Mammary epithelial cell (primary cell): ENCODE measurements at regions of chr5 and their contacts with region 1.

Region 1: DNA sequence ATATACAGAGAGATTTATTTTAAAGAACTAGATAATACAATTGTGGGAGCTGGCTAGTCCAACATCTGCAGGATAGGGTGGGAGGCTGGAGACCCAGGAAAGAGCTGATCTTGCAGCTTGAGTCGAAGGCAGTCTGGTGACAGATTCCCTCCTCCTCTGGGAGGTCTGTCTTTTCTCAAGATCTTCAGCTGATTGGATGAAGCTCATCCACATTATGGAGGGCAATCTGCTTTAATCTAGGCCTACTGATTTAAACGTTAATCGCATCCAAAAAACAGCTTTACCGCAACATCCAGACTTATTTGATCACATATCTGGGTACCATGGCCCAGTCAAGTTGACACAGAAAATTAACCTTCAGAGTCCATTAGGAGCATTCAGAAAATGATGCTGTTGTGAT is 168.1 kb downstream of the ATPSCKMT start:
- DNase-seq: no peak
- H3K4me3 ChIP-seq: no peak overlapping the region
- H3K27ac ChIP-seq: no peak overlapping the region
- H3K4me1 ChIP-seq: no peaks in the 10 kb centered on the region
- H3K27me3 ChIP-seq: no peaks in the 10 kb centered on the region
- CTCF ChIP-seq: no peak

Region 2: GRCh38 chr5:9977070-9977469 is 104.5 kb before region 1 on chr5:
- CTCF ChIA-PET with region 1: no interaction called
- dilution Hi-C with region 1: loop called (anchors 5 kb)
- in situ Hi-C with region 1: no loop called
- intact Hi-C with region 1: no loop called
- DNase-seq: no peak
- H3K4me3 ChIP-seq: no peak overlapping the region
- H3K27ac ChIP-seq: no peak overlapping the region
- H3K4me1 ChIP-seq: no peaks in the 10 kb centered on the region
- H3K27me3 ChIP-seq: no peaks in the 10 kb centered on the region
- CTCF ChIP-seq: no peak

Region 3: DNA sequence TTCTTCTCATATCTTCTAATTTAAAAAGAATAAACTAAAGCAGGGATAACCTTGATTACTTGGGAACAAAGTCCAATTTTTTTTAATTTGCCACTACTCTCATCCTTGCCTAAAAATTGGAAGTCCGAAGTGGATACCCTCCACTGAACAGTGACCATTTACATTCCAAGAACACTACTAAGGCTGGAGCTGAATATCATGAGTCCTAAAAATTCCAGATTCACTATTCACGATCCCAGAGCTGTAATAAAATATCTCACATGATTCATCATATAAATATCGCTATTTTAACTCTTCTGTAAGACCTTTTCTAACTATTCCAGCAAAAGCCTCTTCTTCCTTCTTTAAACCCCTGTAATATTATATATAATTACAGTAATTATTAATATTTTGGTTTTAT is 110.7 kb after region 1 on chr5:
- CTCF ChIA-PET with region 1: no interaction called
- dilution Hi-C with region 1: no loop called
- in situ Hi-C with region 1: no loop called
- intact Hi-C with region 1: no loop called
- DNase-seq: no peak
- H3K4me3 ChIP-seq: no peak overlapping the region
- H3K27ac ChIP-seq: no peak overlapping the region
- H3K4me1 ChIP-seq: no peaks in the 10 kb centered on the region
- H3K27me3 ChIP-seq: no peaks in the 10 kb centered on the region
- CTCF ChIP-seq: no peak

Region 4: DNA sequence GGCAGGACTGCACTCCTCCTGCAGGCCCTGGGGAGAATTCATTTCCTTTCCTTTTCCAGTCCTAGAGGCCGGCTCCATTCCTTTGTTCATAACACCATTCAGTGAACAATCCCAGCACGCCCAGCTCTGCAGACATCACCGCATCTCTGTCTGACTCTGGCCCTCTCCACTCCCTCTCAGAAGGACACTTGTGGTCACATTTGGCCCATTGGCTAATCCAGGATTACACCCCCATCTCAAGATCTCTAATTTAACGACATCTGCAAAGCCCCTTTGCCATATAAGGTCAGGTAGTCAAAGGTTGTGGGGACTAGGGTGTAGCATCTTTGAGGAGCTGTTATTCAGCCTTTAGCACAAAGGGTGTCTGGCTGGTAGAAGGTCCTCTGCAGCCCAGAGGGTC is 864.5 kb after region 1 on chr5:
- CTCF ChIA-PET with region 1: no interaction called
- dilution Hi-C with region 1: no loop called
- in situ Hi-C with region 1: no loop called
- intact Hi-C with region 1: no loop called
- DNase-seq: no peak
- H3K4me3 ChIP-seq: no peak overlapping the region
- H3K27ac ChIP-seq: no peak overlapping the region
- H3K4me1 ChIP-seq: no peaks in the 10 kb centered on the region
- H3K27me3 ChIP-seq: no peaks in the 10 kb centered on the region
- CTCF ChIP-seq: no peak